ENCODE measurements at regions of chr12 and their contacts with region 1.

Region 1: DNA sequence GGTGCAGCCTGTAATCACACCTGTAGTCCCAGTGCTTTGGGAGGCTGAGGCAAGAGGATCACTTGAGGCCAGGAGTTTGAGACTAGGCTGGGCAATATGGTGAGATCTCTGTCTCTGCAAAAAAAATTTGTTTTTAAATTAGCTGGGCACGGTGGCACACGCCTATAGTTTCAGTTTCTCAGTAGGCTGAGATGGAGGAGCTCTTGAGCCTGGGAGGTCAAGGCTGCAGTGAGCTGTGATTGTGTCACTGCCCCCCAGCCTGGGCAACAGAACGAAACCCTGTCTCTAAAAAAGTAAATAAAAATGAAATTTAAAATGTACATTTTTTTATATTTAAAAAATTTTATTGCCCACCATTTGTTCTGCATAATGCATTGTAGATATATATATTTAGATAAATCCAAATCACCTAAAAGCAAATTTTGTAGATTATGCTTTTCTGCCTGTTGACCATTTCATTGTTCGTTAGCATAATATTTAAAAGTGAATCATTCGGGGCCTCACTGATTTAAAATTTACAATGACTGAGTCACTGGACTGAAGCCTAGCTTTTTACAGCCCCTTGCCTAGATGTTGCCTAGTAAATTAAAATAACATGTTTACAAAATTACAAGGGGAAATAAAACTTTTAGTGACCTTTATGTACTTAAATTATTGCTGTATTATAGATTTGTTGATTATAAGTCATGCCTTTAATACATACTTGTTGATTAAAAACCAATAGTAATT is 87.9 kb downstream of the USP15 start:
- DNase-seq: no peak
- ATAC-seq: no peak
- H3K4me3 ChIP-seq: no peak overlapping the region
- H3K4me3 Mint-ChIP-seq: no peak overlapping the region
- H3K27ac ChIP-seq: no peak overlapping the region
- H3K27ac Mint-ChIP-seq: peak overlapping the region in 1 of 9 donors; percentile 45
- H3K4me1 ChIP-seq: peaks cover 0 to 4% of the 10 kb centered on the region in 2 donors
- H3K4me1 Mint-ChIP-seq: peaks cover 23 to 56% (median 35%) of the 10 kb centered on the region in 7 donors
- H3K27me3 ChIP-seq: no peaks in the 10 kb centered on the region
- H3K27me3 Mint-ChIP-seq: no peaks in the 10 kb centered on the region

Region 2: DNA sequence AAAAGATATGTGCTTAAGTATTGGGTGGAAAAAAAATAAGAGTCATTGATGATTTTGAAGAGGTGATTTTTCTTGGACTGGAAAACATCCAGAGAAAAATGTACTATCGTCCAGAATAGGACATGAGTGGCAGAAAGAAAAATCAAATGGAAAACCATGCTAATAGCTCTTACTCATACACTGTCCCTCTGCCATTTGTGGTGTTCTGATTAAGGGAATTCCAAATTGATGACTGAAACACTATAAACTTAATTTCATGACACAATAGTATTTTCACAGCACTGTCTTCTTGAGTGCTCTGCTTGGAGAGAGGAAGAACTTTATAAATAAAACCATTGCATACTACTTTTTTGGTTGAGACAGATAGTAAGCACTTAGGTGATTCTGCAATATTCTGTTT is 15.5 kb before region 1 on chr12:
- CTCF ChIA-PET with region 1: no interaction called
- POLR2A ChIA-PET with region 1: no interaction called
- intact Hi-C with region 1: loop called in 1 of 2 experiments (anchors 2 kb)
- DNase-seq: no peak
- ATAC-seq: no peak
- H3K4me3 ChIP-seq: no peak overlapping the region
- H3K4me3 Mint-ChIP-seq: no peak overlapping the region
- H3K27ac ChIP-seq: no peak overlapping the region
- H3K27ac Mint-ChIP-seq: peak overlapping the region in 4 of 9 donors; percentile 9 to 66 (median 36)
- H3K4me1 ChIP-seq: no peaks in the 10 kb centered on the region
- H3K4me1 Mint-ChIP-seq: peaks cover 18 to 68% (median 44%) of the 10 kb centered on the region in 7 donors
- H3K27me3 ChIP-seq: no peaks in the 10 kb centered on the region
- H3K27me3 Mint-ChIP-seq: no peaks in the 10 kb centered on the region

Region 3: DNA sequence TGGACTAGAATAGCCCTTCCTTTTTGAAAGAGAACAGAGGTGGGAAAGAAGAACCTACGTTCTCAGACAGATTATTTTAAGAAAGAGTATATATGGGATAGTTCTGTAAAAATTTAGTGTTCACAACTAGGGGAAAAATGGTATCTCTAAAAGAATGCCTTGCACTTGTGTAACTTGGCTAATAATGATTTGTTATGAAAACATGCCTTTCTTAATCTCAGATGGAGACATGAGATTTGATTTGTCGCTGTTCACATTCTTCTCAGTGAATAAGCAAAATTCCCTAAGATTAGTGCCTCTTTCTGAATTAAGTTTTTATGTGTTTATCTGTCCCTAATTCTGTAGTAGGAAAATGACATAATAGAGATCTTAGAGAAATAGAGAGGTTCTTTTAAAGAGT is 13.0 kb after region 1 on chr12:
- CTCF ChIA-PET with region 1: no interaction called
- POLR2A ChIA-PET with region 1: no interaction called
- intact Hi-C with region 1: loop called in 1 of 2 experiments (anchors 2 kb)
- DNase-seq: no peak
- ATAC-seq: no peak
- H3K4me3 ChIP-seq: no peak overlapping the region
- H3K4me3 Mint-ChIP-seq: no peak overlapping the region
- H3K27ac ChIP-seq: no peak overlapping the region
- H3K27ac Mint-ChIP-seq: peak overlapping the region in 2 of 9 donors; percentile 16 to 46
- H3K4me1 ChIP-seq: no peaks in the 10 kb centered on the region
- H3K4me1 Mint-ChIP-seq: peaks cover 13 to 62% (median 38%) of the 10 kb centered on the region in 7 donors
- H3K27me3 ChIP-seq: no peaks in the 10 kb centered on the region
- H3K27me3 Mint-ChIP-seq: no peaks in the 10 kb centered on the region

Region 4: GRCh38 chr12:62631471-62632410 is 283.7 kb after region 1 on chr12:
- CTCF ChIA-PET with region 1: no interaction called
- POLR2A ChIA-PET with region 1: no interaction called
- intact Hi-C with region 1: no loop called
- DNase-seq: peak in 6 of 9 donors; percentile 8 to 18 (median 12)
- ATAC-seq: peak; percentile 65
- H3K4me3 ChIP-seq: peak overlapping the region; percentile 45
- H3K4me3 Mint-ChIP-seq: peak overlapping the region; percentile 77 to 90 (median 84)
- H3K27ac ChIP-seq: no peak overlapping the region
- H3K27ac Mint-ChIP-seq: no peak overlapping the region
- H3K4me1 ChIP-seq: peaks cover 0 to 9% of the 10 kb centered on the region in 2 donors
- H3K4me1 Mint-ChIP-seq: peaks cover 4 to 17% (median 9%) of the 10 kb centered on the region in 7 donors
- H3K27me3 ChIP-seq: peaks cover 7 to 11% of the 10 kb centered on the region in 2 donors
- H3K27me3 Mint-ChIP-seq: peaks cover 69 to 91% (median 81%) of the 10 kb centered on the region in 5 donors

Region 5: GRCh38 chr12:63124778-63125177 is 776.7 kb after region 1 on chr12:
- CTCF ChIA-PET with region 1: no interaction called
- POLR2A ChIA-PET with region 1: no interaction called
- intact Hi-C with region 1: no loop called
- DNase-seq: no peak
- ATAC-seq: no peak
- H3K4me3 ChIP-seq: no peak overlapping the region
- H3K4me3 Mint-ChIP-seq: no peak overlapping the region
- H3K27ac ChIP-seq: no peak overlapping the region
- H3K27ac Mint-ChIP-seq: no peak overlapping the region
- H3K4me1 ChIP-seq: no peaks in the 10 kb centered on the region
- H3K4me1 Mint-ChIP-seq: no peaks in the 10 kb centered on the region
- H3K27me3 ChIP-seq: no peaks in the 10 kb centered on the region
- H3K27me3 Mint-ChIP-seq: peaks cover 0 to 17% (median 4%) of the 10 kb centered on the region in 5 donors

Measured in naive thymus-derived CD4-positive, alpha-beta T cell (primary cell).